Right cardiac atrium (tissue), 5 donors: ENCODE measurements at regions of chr17 and their contacts with region 1.

Region 1: DNA sequence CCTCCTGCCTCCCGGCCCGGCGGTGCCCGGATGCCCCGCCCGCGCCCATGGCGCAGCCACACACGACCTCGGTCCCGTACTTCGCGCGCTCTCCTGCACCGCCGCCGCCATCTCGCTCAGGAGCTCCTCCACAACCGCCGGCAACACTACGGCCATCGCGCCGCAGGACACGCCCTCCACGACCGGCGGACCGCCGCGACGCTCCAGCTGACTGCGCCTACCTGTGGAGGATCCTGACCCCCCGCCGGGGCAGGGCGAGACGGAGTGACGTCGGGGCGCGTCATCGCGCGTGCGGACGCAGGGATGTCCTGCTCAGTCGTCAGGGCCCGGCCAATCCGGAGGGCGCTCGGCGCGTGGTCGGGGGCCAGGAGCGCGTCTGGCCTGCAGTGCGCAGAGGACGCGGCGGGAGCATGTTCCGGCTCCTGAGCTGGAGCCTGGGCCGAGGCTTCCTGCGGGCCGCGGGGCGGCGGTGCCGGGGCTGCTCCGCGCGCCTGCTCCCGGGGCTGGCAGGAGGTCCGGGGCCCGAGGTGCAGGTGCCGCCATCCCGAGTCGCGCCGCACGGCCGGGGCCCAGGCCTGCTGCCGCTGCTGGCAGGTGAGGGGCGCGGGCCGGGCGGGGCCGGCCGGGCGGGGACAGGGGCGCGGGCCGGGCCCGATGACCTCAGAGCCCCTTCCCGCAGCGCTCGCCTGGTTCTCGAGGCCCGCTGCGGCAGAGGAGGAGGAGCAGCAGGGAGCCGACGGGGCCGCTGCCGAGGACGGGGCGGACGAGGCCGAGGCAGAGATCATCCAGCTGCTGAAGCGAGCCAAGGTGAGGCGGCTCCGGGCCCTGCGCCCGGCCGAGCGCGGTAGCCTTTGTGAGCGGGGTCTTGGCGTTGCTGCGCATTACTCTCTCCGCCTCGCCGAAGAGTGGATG is at the starts of genes TTC19 and ZSWIM7:
- DNase-seq: peak; percentile 98 to 99 (median 98)
- ATAC-seq: peak; percentile 97 to 98
- H3K4me3 ChIP-seq: peak within 1 kb of the TSS; percentile 82
- H3K27ac ChIP-seq: peak within 1 kb of the TSS; percentile 82
- H3K4me1 ChIP-seq: no peaks in the 10 kb centered on the region
- H3K27me3 ChIP-seq: no peaks in the 10 kb centered on the region
- total RNA-seq, gene TTC19: 24.7 to 31.8 (median 26.8) TPM
- total RNA-seq, gene ZSWIM7: 21.9 to 33.3 (median 29.8) TPM

Region 2: DNA sequence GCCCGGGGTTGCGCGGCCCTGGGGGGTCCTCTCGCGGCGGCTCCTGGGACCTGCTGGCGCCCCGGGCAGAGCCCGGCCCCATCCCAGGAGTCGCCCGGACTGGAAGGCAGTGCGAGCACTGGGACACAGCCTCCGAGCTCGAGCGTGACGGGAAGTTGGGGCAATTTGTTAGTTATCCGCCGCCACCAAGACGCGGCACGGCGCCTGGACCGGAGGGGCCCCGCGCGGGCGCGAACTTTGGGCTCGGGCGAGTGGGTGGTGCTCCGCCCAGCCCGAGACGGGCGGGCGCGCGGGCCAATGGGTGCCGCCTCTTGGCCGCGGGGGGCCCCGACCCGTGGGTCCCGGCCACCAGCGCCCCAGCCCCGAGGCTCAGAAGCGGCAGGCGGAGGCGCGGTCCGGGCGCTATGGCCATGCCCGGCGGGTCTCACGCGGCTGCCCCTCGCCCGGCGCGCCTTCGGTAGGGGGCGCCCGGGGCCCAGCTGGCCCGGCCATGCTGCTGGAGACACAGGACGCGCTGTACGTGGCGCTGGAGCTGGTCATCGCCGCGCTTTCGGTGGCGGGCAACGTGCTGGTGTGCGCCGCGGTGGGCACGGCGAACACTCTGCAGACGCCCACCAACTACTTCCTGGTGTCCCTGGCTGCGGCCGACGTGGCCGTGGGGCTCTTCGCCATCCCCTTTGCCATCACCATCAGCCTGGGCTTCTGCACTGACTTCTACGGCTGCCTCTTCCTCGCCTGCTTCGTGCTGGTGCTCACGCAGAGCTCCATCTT is 54.8 kb before region 1 on chr17 and contains the start of gene ADORA2B:
- intact Hi-C with region 1: loop called in 2 of 4 experiments (anchors 10 kb)
- DNase-seq: peak; percentile 64 to 86 (median 86)
- ATAC-seq: peak; percentile 82 to 87
- H3K4me3 ChIP-seq: peak within 1 kb of the TSS; percentile 47
- H3K27ac ChIP-seq: no peak within 1 kb of the TSS
- H3K4me1 ChIP-seq: peaks cover 3% of the 10 kb centered on the region
- H3K27me3 ChIP-seq: no peaks in the 10 kb centered on the region
- total RNA-seq, gene ADORA2B: 0.28 to 0.64 (median 0.42) TPM

Region 3: DNA sequence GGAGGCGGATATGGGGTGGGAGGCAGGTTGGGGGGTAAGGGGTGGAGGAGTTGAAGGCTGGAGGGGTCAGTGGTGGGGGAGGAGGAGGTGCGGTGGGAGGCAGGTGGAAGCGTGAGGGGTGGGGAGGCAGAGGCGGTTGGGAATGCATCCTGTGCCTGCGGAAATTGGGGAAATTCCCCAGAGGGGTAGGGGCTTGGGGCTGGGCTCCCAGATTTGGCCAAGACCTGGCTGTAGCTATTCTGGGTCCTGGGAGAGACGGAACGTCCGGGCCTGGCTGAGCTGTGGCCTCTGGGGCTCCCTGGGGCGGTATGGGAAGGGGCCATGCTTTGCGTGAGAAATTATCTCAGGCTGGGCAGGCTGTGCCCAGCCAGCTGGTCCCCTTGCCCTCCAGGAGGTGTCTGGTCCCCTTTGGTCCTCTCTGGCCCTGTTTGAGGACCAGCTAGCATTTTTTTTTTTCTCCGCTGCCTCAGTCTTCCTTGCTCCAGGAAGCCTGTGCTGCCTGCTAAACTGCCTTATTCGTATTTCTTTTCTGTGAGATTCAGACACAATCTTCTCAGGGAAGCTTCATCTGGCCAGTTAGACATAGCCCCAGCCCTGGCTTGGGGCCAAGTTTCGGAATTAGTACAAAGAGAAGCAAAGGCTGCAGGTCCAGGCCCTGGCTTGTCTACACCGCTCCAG is 408.4 kb after region 1 on chr17:
- intact Hi-C with region 1: no loop called
- DNase-seq: peak; percentile 64 to 91 (median 78)
- ATAC-seq: peak; percentile 59 to 64
- H3K4me3 ChIP-seq: no peak overlapping the region
- H3K27ac ChIP-seq: peak overlapping the region; percentile 76
- H3K4me1 ChIP-seq: peaks cover 3% of the 10 kb centered on the region
- H3K27me3 ChIP-seq: no peaks in the 10 kb centered on the region